MCF 10A (cell line): ENCODE measurements at regions of chr5 and their contacts with region 1.

Region 1: GRCh38 chr5:124741711-124742496 is 4.5 kb downstream of the ZNF608 start:
- DNase-seq: peak; percentile 95
- H3K4me3 Mint-ChIP-seq: no peak overlapping the region
- H3K27ac Mint-ChIP-seq: no peak overlapping the region
- H3K4me1 Mint-ChIP-seq: peaks cover 12% of the 10 kb centered on the region
- H3K27me3 Mint-ChIP-seq: no peaks in the 10 kb centered on the region
- CTCF ChIP-seq: no peak

Region 2: DNA sequence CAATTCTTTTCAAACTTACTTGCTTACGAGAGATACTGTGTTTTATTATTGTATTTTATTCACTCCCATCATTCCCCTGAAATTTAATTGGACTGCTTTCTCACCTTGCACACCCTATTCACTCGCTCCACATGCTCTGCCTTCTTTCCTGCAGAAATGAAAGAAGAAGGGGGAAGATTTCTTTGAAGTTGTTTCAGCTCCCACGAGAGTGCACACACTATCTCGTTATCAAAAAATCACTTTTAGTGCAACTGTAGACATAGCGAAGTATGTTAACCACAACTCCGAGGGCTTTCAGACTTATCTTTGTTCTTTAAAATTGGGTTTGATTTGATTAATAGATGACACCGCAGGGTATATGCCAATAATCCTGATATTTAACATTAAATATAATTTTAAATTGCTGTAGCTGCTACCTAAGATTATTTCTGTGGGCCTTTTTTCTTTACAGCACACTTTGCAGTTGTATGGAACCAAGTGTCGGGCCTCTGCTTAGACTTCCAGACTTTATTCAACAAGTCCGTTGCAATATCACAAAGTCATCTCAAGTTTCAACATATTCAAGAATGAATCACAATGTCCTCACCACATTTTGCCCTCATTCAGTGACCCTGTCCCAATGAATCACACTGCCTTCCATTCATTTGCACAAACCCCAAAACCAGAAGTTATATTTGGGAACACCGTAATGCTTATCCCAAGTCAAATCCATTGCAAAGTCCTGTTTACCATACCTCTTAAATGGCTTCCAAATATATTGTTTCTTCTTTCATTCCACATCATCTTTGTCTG is 790.5 kb before region 1 on chr5:
- CTCF ChIA-PET with region 1: no interaction called
- POLR2A ChIA-PET with region 1: no interaction called
- intact Hi-C with region 1: loop called (anchors 5 kb)
- DNase-seq: peak; percentile 96
- H3K4me3 Mint-ChIP-seq: peak overlapping the region; percentile 0
- H3K27ac Mint-ChIP-seq: peak overlapping the region; percentile 33
- H3K4me1 Mint-ChIP-seq: peaks cover 29% of the 10 kb centered on the region
- H3K27me3 Mint-ChIP-seq: no peaks in the 10 kb centered on the region
- CTCF ChIP-seq: no peak

Region 3: DNA sequence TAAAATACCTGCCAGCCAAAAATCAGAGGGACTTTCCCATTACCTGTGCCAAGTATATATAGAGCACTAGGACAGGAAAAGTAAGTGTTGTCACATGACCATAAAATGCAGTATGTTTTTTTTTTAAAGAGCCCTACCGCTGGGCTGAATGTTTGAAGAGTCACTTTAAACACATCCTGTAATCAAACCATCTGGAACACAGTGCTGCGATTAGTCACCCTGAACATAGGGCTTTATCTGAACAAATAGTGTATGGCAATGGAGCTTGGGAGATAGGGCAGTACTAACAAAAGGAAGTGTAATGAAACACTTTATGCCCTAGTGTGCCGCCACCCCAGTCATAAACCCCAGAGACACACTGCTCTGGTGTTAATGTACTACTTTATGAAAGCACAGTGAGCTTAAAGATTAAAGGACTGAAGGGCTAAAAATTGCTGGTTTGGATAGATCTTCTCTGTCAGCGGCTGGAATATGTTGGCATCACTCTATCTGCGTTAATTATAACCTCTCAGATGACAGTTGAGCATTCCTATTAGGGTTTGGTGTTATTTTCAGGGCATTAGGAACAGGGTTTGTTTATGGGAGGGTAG is 85.9 kb before region 1 on chr5:
- CTCF ChIA-PET with region 1: interaction called, 3 read pairs
- POLR2A ChIA-PET with region 1: interaction called, 35 read pairs
- intact Hi-C with region 1: loop called (anchors 2 kb)
- DNase-seq: peak; percentile 90
- H3K4me3 Mint-ChIP-seq: no peak overlapping the region
- H3K27ac Mint-ChIP-seq: no peak overlapping the region
- H3K4me1 Mint-ChIP-seq: peaks cover 39% of the 10 kb centered on the region
- H3K27me3 Mint-ChIP-seq: no peaks in the 10 kb centered on the region
- CTCF ChIP-seq: no peak

Region 4: GRCh38 chr5:124783794-124784193 is 41.9 kb after region 1 on chr5:
- CTCF ChIA-PET with region 1: no interaction called
- POLR2A ChIA-PET with region 1: interaction called, 20 read pairs
- intact Hi-C with region 1: loop called (anchors 1 kb)
- DNase-seq: peak; percentile 96
- H3K4me3 Mint-ChIP-seq: no peak overlapping the region
- H3K27ac Mint-ChIP-seq: peak overlapping the region; percentile 36
- H3K4me1 Mint-ChIP-seq: peaks cover 5% of the 10 kb centered on the region
- H3K27me3 Mint-ChIP-seq: no peaks in the 10 kb centered on the region
- CTCF ChIP-seq: no peak

Region 5: GRCh38 chr5:124824637-124825158 is 82.8 kb after region 1 on chr5:
- CTCF ChIA-PET with region 1: no interaction called
- POLR2A ChIA-PET with region 1: interaction called, 103 read pairs
- intact Hi-C with region 1: no loop called
- DNase-seq: peak; percentile 96
- H3K4me3 Mint-ChIP-seq: peak overlapping the region; percentile 55
- H3K27ac Mint-ChIP-seq: peak overlapping the region; percentile 89
- H3K4me1 Mint-ChIP-seq: peaks cover 33% of the 10 kb centered on the region
- H3K27me3 Mint-ChIP-seq: no peaks in the 10 kb centered on the region
- CTCF ChIP-seq: no peak

Region 6: DNA sequence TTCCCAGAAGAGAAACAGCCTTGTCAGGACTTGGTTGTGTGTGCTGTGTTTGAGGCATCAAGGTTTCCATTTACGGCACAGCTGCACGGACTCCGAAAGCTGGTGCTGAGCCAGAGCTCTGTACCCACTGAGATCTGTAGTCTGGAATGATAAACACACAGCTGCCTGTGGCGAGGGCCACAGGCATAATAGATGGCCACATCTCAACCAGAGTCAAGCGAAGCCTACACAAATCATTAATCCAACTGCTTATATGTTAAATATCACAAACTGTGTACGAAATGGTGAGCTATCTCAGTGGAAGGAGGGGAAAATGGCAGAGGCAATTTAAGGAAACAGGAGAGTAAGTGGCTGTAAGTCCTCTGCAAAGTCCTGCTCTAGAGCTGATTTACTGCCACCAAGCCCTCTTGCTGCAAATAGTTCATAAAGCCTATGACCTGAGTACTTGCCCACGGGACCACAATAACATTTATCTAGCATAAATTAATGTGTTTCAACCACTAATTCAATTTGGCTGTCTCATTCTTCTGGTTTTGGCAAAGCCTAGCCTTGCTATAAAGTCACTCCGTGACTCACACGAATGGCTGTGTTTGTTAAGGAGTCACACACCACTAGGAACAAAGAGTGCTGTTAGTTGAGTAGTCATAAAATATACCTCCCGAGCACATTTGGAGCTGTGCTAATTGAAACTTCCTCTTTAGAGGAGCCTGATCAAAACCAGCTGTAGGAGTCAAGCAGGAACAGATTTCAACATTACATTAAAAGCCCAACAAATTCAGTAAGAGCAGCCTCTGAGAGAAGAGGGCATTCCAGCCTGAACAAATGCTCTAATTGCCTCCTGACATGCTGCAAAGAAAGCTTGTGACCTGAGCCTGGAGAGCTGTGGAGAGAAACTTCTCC is 743.1 kb after region 1 on chr5:
- CTCF ChIA-PET with region 1: no interaction called
- POLR2A ChIA-PET with region 1: interaction called, 12 read pairs
- intact Hi-C with region 1: loop called (anchors 10 kb)
- DNase-seq: peak; percentile 98
- H3K4me3 Mint-ChIP-seq: peak overlapping the region; percentile 64
- H3K27ac Mint-ChIP-seq: peak overlapping the region; percentile 84
- H3K4me1 Mint-ChIP-seq: peaks cover 51% of the 10 kb centered on the region
- H3K27me3 Mint-ChIP-seq: no peaks in the 10 kb centered on the region
- CTCF ChIP-seq: no peak

Region 7: GRCh38 chr5:125595095-125595494 is 853.2 kb after region 1 on chr5:
- CTCF ChIA-PET with region 1: no interaction called
- POLR2A ChIA-PET with region 1: no interaction called
- intact Hi-C with region 1: no loop called
- DNase-seq: no peak
- H3K4me3 Mint-ChIP-seq: no peak overlapping the region
- H3K27ac Mint-ChIP-seq: no peak overlapping the region
- H3K4me1 Mint-ChIP-seq: no peaks in the 10 kb centered on the region
- H3K27me3 Mint-ChIP-seq: no peaks in the 10 kb centered on the region
- CTCF ChIP-seq: no peak